ENCODE measurements at regions of chr6 and their contacts with region 1.

Region 1: DNA sequence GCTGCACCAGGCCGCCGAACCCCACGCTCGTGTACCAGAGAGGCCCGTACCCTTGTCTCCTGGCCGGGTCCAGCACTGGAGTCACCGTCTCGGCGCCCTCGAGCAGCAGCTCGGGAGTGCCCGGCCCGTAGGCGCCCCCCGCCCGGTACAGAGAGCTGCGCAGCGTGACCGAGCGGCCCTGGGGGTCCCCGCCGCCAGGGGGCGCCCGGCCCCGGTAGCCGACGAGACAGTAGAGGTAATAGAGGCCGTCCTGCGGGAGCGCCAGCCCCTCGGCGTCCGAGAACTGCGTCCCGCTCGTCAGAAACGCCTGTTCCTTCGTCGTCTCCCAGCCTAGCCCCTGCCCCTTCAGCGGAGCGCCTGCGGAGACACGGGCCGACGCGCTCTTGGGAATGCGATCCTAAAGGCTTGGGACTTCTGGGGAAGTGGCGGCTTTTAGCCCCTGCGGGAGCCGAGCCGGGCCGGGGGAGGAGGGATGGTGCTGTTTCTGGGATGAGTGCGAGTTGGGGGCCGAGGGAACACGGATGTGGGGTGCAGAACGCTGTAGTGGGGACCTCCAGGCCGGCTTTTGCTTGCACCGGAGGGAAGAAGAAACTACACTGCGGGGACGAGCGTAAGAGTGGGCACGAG is 1.3 kb downstream of the LTB start:
- DNase-seq: peak; percentile 75
- ATAC-seq: peak; percentile 98
- H3K4me3 ChIP-seq: peak overlapping the region; percentile 83
- H3K27ac ChIP-seq: no peak overlapping the region
- H3K4me1 ChIP-seq: peaks cover 11% of the 10 kb centered on the region; the same call in 1 of the 2 replicates
- H3K27me3 ChIP-seq: no peaks in the 10 kb centered on the region
- CTCF ChIP-seq: peak; percentile 95

Region 2: GRCh38 chr6:31559958-31560696 is 20.8 kb before region 1 on chr6:
- CTCF ChIA-PET with region 1: no interaction called
- POLR2A ChIA-PET with region 1: interaction called, 18 read pairs
- intact Hi-C with region 1: no loop called
- DNase-seq: peak; percentile 65
- ATAC-seq: peak; percentile 68
- H3K4me3 ChIP-seq: no peak overlapping the region
- H3K27ac ChIP-seq: peak overlapping the region; percentile 45
- H3K4me1 ChIP-seq: peaks cover 23% of the 10 kb centered on the region
- H3K27me3 ChIP-seq: no peaks in the 10 kb centered on the region
- CTCF ChIP-seq: no peak